Body of pancreas (tissue), 4 donors: ENCODE measurements at regions of chr11 and their contacts with region 1.

Region 1: GRCh38 chr11:45475173-45475572 is 189.0 kb upstream of the SYT13 start:
- DNase-seq: no peak
- ATAC-seq: no peak
- H3K4me3 ChIP-seq: no peak overlapping the region
- H3K27ac ChIP-seq: no peak overlapping the region
- H3K4me1 ChIP-seq: peaks cover 13% of the 10 kb centered on the region
- H3K27me3 ChIP-seq: no peaks in the 10 kb centered on the region
- CTCF ChIP-seq: no peak
- POLR2A ChIP-seq: no peak

Region 2: DNA sequence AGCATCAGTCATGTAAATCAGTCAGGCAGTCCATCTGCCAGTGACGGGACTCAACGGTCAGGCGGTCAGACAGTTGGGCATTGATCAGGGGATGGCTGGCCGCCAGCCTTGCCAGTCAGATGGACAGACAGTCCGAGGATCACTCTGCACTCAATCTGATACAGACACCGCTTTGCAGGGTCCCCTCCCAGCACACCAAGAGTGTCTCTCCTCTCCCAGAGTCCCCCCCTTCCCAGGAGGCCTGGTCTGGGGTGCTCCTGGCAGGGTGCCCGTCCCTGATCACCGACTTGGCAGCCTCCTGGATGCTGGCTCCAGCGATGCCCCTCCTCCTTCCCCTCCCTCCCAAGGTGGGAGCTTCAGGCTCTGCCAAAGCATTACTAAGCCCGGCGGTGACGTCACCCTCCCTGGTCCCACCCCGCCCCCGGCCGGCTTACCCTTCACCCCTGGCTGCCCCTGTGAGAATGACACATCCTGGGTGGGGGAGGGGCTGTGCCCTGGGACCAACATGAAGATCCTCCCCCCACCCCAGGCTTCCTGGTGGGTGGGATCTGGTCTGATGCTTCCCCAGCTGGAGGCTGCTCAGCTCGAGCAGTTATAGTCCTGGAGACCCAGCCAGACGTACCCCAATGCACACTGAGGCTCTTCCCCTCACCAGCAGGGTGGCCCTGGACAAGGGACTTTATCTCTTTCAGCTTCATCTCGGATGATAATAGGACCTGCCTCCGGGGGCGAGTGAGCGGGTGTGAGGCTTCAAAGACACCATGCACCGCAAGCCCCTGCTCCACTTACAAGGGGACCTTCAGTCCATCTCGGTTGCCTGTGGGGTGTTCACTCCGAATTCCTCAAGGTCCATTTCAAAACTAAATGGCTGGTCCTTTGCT is 840.5 kb before region 1 on chr11:
- intact Hi-C with region 1: no loop called
- DNase-seq: peak; percentile 73 to 82 (median 80)
- ATAC-seq: peak; percentile 83
- H3K4me3 ChIP-seq: no peak overlapping the region
- H3K27ac ChIP-seq: no peak overlapping the region
- H3K4me1 ChIP-seq: peaks cover 8% of the 10 kb centered on the region
- H3K27me3 ChIP-seq: no peaks in the 10 kb centered on the region
- CTCF ChIP-seq: peak in 1 of 7 experiments; percentile 2
- POLR2A ChIP-seq: no peak

Region 3: GRCh38 chr11:45102810-45103621 is 372.2 kb before region 1 on chr11:
- intact Hi-C with region 1: no loop called
- DNase-seq: peak; percentile 58 to 63 (median 61)
- ATAC-seq: peak; percentile 70
- H3K4me3 ChIP-seq: no peak overlapping the region
- H3K27ac ChIP-seq: no peak overlapping the region
- H3K4me1 ChIP-seq: peaks cover 3% of the 10 kb centered on the region
- H3K27me3 ChIP-seq: no peaks in the 10 kb centered on the region
- CTCF ChIP-seq: peak; percentile 91 to 99 (median 95)
- POLR2A ChIP-seq: no peak

Region 4: DNA sequence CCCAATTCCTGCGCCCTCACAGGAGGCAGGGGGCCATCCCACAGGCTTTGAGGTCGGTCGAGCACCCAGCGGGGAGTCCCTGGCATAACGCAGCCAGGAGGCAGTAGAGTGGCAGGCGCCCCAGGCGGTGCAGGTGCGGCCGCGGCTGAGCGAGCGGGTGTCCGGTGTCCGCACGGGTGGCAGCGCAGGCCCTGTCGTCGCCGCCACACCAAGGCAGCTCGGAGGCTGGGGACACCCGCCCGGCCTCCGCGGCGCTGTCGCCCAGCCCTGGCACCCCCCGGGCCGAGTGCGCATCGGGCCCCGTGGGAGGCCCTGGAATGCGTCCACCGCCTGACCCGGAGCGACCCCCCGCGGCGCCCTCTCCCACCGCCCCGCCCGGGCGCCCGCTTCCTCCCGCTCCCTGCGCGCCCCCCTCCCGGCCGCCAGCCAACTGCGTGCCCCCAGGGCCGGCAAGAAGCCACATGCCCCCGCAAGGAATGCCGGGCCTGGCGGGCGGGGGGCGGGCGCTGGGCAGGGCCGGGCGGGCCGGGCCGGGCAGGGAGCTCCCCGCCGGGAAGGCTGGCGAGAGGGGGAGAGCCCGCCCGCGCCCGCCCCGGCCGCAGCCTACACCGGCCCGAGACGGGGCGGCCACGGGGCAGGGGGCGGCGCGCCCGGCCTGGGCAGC is 294.9 kb before region 1 on chr11:
- intact Hi-C with region 1: no loop called
- DNase-seq: peak; percentile 69 to 80 (median 74)
- ATAC-seq: peak; percentile 81
- H3K4me3 ChIP-seq: peak overlapping the region in 1 of 2 donors; percentile 27
- H3K27ac ChIP-seq: peak overlapping the region; percentile 86 to 92 (median 88)
- H3K4me1 ChIP-seq: peaks cover 30% of the 10 kb centered on the region
- H3K27me3 ChIP-seq: no peaks in the 10 kb centered on the region
- CTCF ChIP-seq: peak; percentile 36 to 70 (median 55)
- POLR2A ChIP-seq: peak; percentile 39 to 60 (median 56)

Region 5: DNA sequence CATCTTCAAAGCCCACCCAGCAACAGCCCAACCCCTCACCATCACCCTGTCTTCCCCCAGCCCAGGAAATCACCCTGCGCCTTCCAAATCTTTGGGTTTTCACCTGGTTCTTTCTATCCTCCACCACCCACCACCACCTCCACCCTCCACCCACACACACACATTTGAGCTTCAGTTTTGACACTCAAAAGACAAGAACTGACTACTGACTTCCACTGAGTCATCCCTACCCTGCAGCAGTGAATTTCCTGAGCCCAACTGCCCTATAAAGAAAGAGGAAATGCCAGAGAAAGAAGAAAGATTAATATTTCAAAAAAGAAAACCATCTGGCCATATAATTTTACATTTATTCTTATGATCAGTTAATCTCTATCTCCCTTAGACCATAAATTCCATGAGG is 52.7 kb after region 1 on chr11:
- intact Hi-C with region 1: loop called (anchors 5 kb)
- DNase-seq: no peak
- ATAC-seq: no peak
- H3K4me3 ChIP-seq: no peak overlapping the region
- H3K27ac ChIP-seq: no peak overlapping the region
- H3K4me1 ChIP-seq: no peaks in the 10 kb centered on the region
- H3K27me3 ChIP-seq: no peaks in the 10 kb centered on the region
- CTCF ChIP-seq: no peak
- POLR2A ChIP-seq: no peak